ENCODE measurements at regions of chr20 and their contacts with region 1.

Region 1: GRCh38 chr20:48858075-48858790 is 30.4 kb upstream of the PREX1 start:
- DNase-seq: no peak
- ATAC-seq: no peak
- H3K4me3 ChIP-seq: no peak overlapping the region
- H3K27ac ChIP-seq: no peak overlapping the region
- H3K4me1 ChIP-seq: peaks cover 42% of the 10 kb centered on the region
- H3K27me3 ChIP-seq: no peaks in the 10 kb centered on the region
- CTCF ChIP-seq: no peak
- EP300 ChIP-seq: no peak
- POLR2A ChIP-seq: no peak
- RAD21 ChIP-seq: no peak

Region 2: DNA sequence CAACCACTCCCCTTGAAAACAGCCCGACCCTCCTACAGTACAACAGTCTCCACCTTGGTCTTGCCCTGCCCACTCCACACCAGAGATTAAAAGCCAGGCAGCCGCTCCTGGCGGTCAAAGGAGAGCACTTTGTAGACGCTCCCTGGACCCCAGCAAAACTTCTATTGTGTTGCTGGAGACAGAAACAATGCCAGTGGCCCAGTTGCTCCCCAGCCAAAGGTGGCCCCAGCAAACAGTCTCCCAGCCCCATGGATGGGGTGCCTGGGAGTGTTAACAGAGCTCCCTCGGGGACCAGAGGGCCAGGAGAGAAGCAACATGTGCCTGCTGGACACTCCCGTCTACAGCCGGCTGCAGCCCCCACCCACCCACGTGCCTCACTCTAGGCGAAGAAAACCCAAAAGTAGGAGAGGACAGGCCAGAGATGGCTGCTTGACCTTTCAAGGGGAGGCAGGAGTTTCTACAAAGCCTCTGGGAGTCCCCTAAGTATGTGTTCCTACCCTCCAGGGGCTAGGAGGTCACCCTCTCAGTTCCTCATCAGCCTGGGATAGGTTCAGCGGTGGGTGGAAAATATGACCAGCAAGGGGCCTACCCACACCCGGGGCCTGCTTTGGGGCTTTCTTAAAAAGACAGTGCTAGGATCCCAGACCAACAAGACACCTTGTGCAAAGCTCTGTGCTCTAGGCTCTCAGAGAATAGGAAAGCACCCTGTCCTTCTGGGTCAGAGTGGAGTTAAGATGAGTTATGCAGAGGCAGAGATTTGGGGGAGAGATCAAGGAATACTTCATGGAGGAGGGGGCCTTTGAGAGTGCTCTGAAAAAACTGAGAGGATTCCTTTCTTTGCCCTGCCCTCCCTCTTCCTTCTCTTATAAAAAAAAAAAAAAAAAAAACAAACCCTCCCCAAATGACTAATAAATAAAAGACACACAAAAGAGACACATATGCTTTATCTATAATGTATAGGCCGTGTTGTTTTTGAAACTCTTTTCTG is 11.4 kb before region 1 on chr20:
- CTCF ChIA-PET with region 1: interaction called, 5 read pairs
- POLR2A ChIA-PET with region 1: interaction called, 28 read pairs
- RAD21 ChIA-PET with region 1: interaction called, 6 read pairs
- SMC1A ChIA-PET with region 1: interaction called, 9 read pairs
- in situ Hi-C with region 1: no loop called
- intact Hi-C with region 1: no loop called
- DNase-seq: peak; percentile 93
- ATAC-seq: peak; percentile 97
- H3K4me3 ChIP-seq: no peak overlapping the region; the same call in 1 of the 2 replicates
- H3K27ac ChIP-seq: peak overlapping the region; percentile 91
- H3K4me1 ChIP-seq: peaks cover 36% of the 10 kb centered on the region
- H3K27me3 ChIP-seq: no peaks in the 10 kb centered on the region
- CTCF ChIP-seq: no peak
- EP300 ChIP-seq: peak; percentile 92 to 97
- POLR2A ChIP-seq: peak; percentile 49; the same call in 1 of the 2 replicates
- RAD21 ChIP-seq: no peak

Region 3: GRCh38 chr20:48889144-48890114 is 31.2 kb after region 1 on chr20:
- CTCF ChIA-PET with region 1: no interaction called
- POLR2A ChIA-PET with region 1: no interaction called
- RAD21 ChIA-PET with region 1: no interaction called
- SMC1A ChIA-PET with region 1: interaction called, 11 read pairs
- in situ Hi-C with region 1: no loop called
- intact Hi-C with region 1: no loop called
- DNase-seq: no peak
- ATAC-seq: peak; percentile 89
- H3K4me3 ChIP-seq: 0 out of 2 replicates have a peak overlapping the region, but pooled peaks have one; percentile 39
- H3K27ac ChIP-seq: peak overlapping the region; percentile 43; the same call in 1 of the 2 replicates
- H3K4me1 ChIP-seq: peaks cover 6% of the 10 kb centered on the region
- H3K27me3 ChIP-seq: no peaks in the 10 kb centered on the region
- CTCF ChIP-seq: no peak
- EP300 ChIP-seq: peak in 1 of 2 experiments; percentile 77; a peak in 1 of 4 replicates
- POLR2A ChIP-seq: no peak
- RAD21 ChIP-seq: no peak

Region 4: GRCh38 chr20:49054056-49054643 is 195.9 kb after region 1 on chr20:
- CTCF ChIA-PET with region 1: no interaction called
- POLR2A ChIA-PET with region 1: no interaction called
- RAD21 ChIA-PET with region 1: no interaction called
- SMC1A ChIA-PET with region 1: no interaction called
- in situ Hi-C with region 1: no loop called
- intact Hi-C with region 1: no loop called
- DNase-seq: peak; percentile 20
- ATAC-seq: peak; percentile 86
- H3K4me3 ChIP-seq: peak overlapping the region; percentile 45; the same call in 1 of the 2 replicates
- H3K27ac ChIP-seq: 0 out of 2 replicates have a peak overlapping the region, but pooled peaks have one; percentile 0
- H3K4me1 ChIP-seq: peaks cover 24% of the 10 kb centered on the region
- H3K27me3 ChIP-seq: no peaks in the 10 kb centered on the region
- CTCF ChIP-seq: no peak
- EP300 ChIP-seq: no peak; a peak in 1 of 4 replicates
- POLR2A ChIP-seq: no peak
- RAD21 ChIP-seq: no peak

Region 5: GRCh38 chr20:49207076-49207475 is 348.8 kb after region 1 on chr20:
- CTCF ChIA-PET with region 1: no interaction called
- POLR2A ChIA-PET with region 1: no interaction called
- RAD21 ChIA-PET with region 1: no interaction called
- SMC1A ChIA-PET with region 1: no interaction called
- in situ Hi-C with region 1: no loop called
- intact Hi-C with region 1: no loop called
- DNase-seq: no peak
- ATAC-seq: peak; percentile 83
- H3K4me3 ChIP-seq: no peak overlapping the region
- H3K27ac ChIP-seq: no peak overlapping the region
- H3K4me1 ChIP-seq: no peaks in the 10 kb centered on the region
- H3K27me3 ChIP-seq: no peaks in the 10 kb centered on the region
- CTCF ChIP-seq: peak; percentile 35 to 50 (median 40); a peak in 5 of 6 replicates
- EP300 ChIP-seq: no peak
- POLR2A ChIP-seq: no peak
- RAD21 ChIP-seq: peak; percentile 67

Measured in GM12878 (cell line).